ENCODE measurements at regions of chr20 and their contacts with region 1.

Region 1: DNA sequence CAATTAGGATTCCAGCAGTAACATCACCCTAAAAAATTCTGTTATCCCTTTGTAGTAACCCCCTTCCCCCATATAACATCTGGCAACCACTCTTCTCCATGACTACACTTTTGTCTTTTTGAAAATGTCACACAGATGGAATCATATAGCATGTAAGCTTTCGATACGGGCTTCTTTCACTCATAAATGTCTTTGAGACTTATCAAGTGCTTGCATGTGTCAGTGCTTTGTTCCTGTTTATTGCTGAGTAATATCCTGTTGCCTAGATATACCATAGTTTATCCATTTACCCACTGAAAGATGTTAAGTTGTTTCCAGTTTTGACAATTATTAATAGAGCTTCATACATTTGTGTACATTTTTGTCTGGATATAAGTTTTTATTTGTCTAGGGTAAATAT is 10.4 kb upstream of the SNPH start:
- DNase-seq: no peak
- H3K4me3 ChIP-seq: no peak overlapping the region
- H3K27ac ChIP-seq: no peak overlapping the region
- H3K4me1 ChIP-seq: no peaks in the 10 kb centered on the region
- H3K27me3 ChIP-seq: peaks cover 0 to 4% of the 10 kb centered on the region in 2 donors
- CTCF ChIP-seq: no peak
- POLR2A ChIP-seq: no peak

Region 2: GRCh38 chr20:1171461-1172093 is 84.1 kb before region 1 on chr20:
- intact Hi-C with region 1: no loop called
- DNase-seq: no peak
- H3K4me3 ChIP-seq: no peak overlapping the region
- H3K27ac ChIP-seq: no peak overlapping the region
- H3K4me1 ChIP-seq: no peaks in the 10 kb centered on the region
- H3K27me3 ChIP-seq: no peaks in the 10 kb centered on the region
- CTCF ChIP-seq: no peak
- POLR2A ChIP-seq: no peak

Region 3: GRCh38 chr20:1299522-1299921 is 43.8 kb after region 1 on chr20:
- intact Hi-C with region 1: no loop called
- DNase-seq: no peak
- H3K4me3 ChIP-seq: no peak overlapping the region
- H3K27ac ChIP-seq: no peak overlapping the region
- H3K4me1 ChIP-seq: no peaks in the 10 kb centered on the region
- H3K27me3 ChIP-seq: no peaks in the 10 kb centered on the region
- CTCF ChIP-seq: no peak
- POLR2A ChIP-seq: no peak

Region 4: DNA sequence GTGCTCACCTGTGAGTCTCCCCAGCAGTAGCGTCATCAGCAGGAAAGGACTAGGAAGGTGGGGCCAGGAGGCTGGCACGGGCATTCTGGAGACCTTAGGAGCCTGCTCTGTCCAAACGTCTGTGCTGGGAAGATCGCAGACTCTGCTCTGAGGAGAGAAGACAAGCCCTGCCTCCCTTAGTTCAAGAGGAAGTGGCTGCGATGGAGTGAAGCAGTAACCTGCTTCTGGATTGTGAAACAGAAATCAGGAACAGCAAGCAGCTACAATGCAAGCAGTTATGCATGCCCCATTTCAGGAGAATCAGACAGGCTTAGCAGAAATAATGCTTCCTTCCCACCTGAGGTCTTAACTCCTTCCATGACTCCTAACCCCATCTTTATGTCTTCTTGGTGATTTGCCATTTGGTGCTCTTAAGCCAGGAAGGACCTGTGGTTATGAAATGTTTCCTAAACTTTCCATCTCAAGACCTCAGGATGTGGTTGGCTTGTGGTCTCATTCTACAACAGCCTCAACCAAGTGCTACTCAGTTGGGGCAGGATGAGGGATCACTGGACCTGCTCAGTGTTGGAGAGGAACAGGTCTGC is 364.3 kb after region 1 on chr20 and contains the start of gene SIRPB1:
- intact Hi-C with region 1: loop called (anchors 10 kb)
- DNase-seq: no peak
- H3K4me3 ChIP-seq: no peak within 1 kb of the TSS
- H3K27ac ChIP-seq: no peak within 1 kb of the TSS
- H3K4me1 ChIP-seq: no peaks in the 10 kb centered on the region
- H3K27me3 ChIP-seq: no peaks in the 10 kb centered on the region
- CTCF ChIP-seq: no peak
- POLR2A ChIP-seq: no peak
- total RNA-seq, gene SIRPB1: 2.6 to 8.5 (median 5.8) TPM

Measured in breast epithelium (tissue), 4 donors.